ENCODE measurements at regions of chr1 and their contacts with region 1.

Region 1: DNA sequence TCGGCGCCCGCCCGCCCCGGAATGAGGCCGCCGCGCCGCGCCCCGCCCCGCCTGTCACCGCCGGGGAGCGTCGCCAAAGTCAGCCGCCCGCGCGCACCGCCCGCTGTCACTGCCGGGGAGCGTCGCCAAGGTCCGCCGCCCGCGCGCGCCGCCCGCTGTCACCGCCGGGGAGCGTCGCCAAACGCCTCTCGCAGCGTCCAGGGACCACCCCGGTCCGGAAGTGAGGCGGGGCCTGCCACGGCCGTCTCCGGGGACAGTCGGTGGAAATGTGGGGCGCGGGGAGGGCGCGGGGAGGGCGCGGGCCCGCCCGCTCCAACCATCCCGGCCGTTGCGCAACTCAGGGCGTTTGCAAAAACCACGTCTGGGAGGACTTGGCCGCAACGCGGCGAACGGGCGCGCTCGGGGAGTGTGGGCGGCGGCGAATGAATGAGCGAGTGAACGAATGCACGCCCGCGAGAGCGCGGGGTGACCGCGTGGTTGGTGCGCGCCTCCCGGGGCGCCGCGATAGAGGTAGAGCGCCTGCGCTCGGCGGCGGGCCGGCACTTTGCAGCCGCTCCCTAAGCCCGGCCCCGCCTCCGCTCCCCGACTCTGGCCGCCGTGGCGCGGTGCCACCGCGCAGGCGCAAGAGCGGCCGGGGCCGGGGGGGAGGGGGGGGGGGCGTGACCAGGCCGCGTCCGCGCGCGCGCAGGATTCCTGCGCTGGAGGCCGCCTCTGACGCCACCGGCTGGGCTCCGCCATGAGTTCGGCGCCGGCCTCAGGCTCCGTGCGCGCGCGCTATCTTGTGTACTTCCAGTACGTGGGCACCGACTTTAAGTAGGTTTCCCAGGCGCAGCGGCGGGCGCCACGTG is at the starts of genes ACAP3 and PUSL1:
- DNase-seq: peak; percentile 95
- H3K4me3 ChIP-seq: peak within 1 kb of the TSS; percentile 90
- H3K27ac ChIP-seq: peak within 1 kb of the TSS; percentile 88
- H3K4me1 ChIP-seq: peaks cover 35% of the 10 kb centered on the region
- CTCF ChIP-seq: no peak
- total RNA-seq, gene ACAP3: 26.3 and 26.8 TPM in 2 replicates
- total RNA-seq, gene PUSL1: 41.8 and 57.1 TPM in 2 replicates

Region 2: DNA sequence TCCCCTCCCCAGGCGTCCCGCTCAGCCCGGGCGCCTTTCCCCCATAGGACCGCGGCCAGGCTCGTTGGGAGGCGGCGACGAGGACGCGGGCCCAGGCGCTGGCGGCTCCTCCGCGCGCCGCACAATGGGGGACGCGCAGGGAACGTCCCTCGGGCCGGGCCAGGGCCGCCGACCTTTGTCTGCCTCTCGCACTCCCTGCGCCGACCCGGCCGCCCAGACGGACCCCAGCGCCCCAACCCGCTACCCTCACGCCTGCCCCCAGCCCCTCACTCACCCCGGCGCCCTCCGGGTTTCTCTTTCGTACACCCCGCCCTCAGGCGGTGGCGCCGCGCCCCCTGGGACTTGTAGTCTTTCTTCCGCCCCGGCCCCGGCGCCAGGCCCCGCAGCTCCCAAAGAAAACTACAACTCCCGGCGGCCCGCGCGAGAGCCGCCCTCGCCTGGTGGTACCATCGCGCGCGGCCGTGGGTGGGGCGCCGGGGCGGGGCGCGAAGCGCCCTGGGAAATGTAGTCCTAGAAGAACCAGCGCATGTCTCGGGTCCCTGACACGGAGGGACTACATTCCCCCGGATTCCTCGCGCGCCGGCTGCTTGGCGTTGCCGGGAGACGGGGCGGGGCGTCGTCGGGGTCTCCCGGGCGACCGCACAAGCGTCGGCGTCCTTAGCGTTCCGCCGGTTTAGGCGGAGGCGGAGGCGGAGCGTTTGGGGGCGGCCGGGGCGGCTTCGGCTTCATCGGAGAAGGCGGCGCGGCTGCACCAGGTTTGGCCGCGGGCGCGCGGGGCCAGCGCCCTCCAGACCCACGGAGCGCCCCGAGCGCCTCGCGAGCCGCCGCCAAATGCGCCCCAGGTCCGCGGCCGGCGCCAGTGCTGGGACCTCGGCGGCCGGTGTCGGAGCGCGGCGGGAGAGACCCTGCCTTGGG is 192.1 kb before region 1 on chr1 and contains the start of gene C1orf159:
- CTCF ChIA-PET with region 1: no interaction called
- POLR2A ChIA-PET with region 1: no interaction called
- intact Hi-C with region 1: loop called (anchors 5 kb)
- DNase-seq: peak; percentile 98
- H3K4me3 ChIP-seq: peak within 1 kb of the TSS; percentile 95
- H3K27ac ChIP-seq: no peak within 1 kb of the TSS
- H3K4me1 ChIP-seq: peaks cover 5% of the 10 kb centered on the region
- CTCF ChIP-seq: no peak
- total RNA-seq, gene C1orf159: 13.1 and 27.6 TPM in 2 replicates

Region 3: GRCh38 chr1:1231400-1232223 is 76.5 kb before region 1 on chr1 and contains the start of gene SDF4:
- CTCF ChIA-PET with region 1: no interaction called
- POLR2A ChIA-PET with region 1: no interaction called
- intact Hi-C with region 1: loop called (anchors 5 kb)
- DNase-seq: peak; percentile 97
- H3K4me3 ChIP-seq: peak within 1 kb of the TSS; percentile 78
- H3K27ac ChIP-seq: peak within 1 kb of the TSS; percentile 43
- H3K4me1 ChIP-seq: peaks cover 28% of the 10 kb centered on the region
- CTCF ChIP-seq: no peak
- total RNA-seq, gene SDF4: 44.2 and 47.7 TPM in 2 replicates

Region 4: DNA sequence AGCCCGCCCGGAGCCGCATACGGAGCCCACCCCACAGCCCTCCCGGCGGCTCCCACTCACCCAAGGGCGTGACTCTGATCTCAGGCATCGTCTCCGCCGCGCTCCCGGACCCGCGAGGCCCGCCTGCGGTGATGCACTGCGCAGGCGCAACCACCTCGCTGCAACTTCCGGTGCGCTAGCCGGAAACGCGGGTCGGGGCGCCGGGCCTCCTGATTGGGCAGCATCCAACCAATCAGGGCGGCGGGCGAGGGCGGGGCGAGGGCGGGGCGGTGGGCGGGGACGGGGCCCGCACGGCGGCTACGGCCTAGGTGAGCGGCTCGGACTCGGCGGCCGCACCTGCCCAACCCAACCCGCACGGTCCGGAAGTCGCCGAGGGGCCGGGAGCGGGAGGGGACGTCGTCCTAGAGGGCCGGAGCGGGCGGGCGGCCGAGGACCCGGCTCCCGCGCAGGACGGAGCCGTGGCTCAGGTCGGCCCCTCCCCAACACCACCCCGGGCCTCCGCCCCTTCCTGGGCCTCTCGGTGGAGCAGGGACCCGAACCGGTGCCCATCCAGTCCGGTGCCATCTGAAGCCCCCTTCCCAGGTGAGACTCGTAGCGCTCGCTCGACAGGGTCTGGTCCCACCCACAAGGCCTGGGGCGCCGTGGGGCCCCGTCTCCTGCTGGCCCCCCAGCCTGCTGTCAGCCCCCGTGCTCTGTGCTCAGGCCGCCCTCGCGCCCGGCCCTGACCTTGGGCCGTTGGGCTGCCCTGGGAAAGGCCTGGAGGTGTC is 16.6 kb after region 1 on chr1 and contains the starts of genes CPTP and INTS11:
- CTCF ChIA-PET with region 1: no interaction called
- POLR2A ChIA-PET with region 1: no interaction called
- intact Hi-C with region 1: loop called (anchors 2 kb)
- DNase-seq: peak; percentile 96
- H3K4me3 ChIP-seq: peak within 1 kb of the TSS; percentile 84
- H3K27ac ChIP-seq: peak within 1 kb of the TSS; percentile 36
- H3K4me1 ChIP-seq: peaks cover 25% of the 10 kb centered on the region
- CTCF ChIP-seq: no peak
- total RNA-seq, gene CPTP: 16.6 and 18.5 TPM in 2 replicates
- total RNA-seq, gene INTS11: 128 and 142 TPM in 2 replicates

Region 5: DNA sequence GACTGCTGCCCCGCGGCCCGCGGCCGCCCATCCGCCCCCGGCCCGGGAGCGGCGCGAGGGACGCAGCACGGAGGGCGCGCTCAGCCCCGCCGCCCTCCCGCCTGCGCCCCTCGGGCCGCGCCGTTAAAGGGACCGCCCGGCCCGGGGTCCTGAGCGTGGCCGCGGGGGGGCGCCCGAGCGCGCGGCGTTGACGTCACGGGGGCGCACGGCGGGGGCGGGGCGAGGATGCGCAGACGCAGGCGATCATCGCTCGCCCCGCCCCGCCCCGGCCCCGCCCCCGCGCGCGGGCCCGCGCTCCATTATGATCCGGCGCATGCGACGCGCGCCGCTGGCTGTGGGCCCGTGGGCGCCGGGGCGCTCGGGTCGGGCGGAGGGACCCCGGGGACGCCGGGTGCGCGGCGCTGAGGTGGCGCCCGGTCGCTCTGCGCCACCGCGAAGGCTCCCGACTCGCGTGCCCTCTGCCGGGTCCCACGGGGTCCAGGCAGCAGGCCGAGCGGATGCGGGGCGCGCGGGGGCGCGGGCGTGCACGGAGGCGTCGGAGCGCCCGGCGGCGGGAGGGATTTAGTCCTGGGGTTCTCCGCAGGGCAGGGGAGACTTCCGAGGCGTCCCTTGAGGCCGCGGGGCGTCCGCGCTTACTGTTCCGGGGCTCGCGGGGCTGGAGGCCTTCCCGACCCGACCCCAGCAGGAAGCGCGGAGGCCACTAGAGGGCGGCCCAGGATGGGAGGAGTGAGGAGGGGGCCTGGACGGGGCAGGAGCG is 41.3 kb after region 1 on chr1 and contains the start of gene DVL1:
- CTCF ChIA-PET with region 1: no interaction called
- POLR2A ChIA-PET with region 1: no interaction called
- intact Hi-C with region 1: loop called (anchors 1 kb)
- DNase-seq: peak; percentile 80
- H3K4me3 ChIP-seq: peak within 1 kb of the TSS; percentile 78
- H3K27ac ChIP-seq: peak within 1 kb of the TSS; percentile 64
- H3K4me1 ChIP-seq: peaks cover 31% of the 10 kb centered on the region
- CTCF ChIP-seq: peak; percentile 60
- total RNA-seq, gene DVL1: 41.7 and 47.1 TPM in 2 replicates

Region 6: GRCh38 chr1:1471389-1472052 is 163.4 kb after region 1 on chr1 and contains the start of gene ATAD3B:
- CTCF ChIA-PET with region 1: no interaction called
- POLR2A ChIA-PET with region 1: no interaction called
- intact Hi-C with region 1: loop called (anchors 2 kb)
- DNase-seq: peak; percentile 92
- H3K4me3 ChIP-seq: peak within 1 kb of the TSS; percentile 97
- H3K27ac ChIP-seq: peak within 1 kb of the TSS; percentile 83
- H3K4me1 ChIP-seq: peaks cover 25% of the 10 kb centered on the region
- CTCF ChIP-seq: no peak
- total RNA-seq, gene ATAD3B: 43.8 and 54.9 TPM in 2 replicates

Measured in OCI-LY7 (cell line).